ENCODE measurements at regions of chr13 and their contacts with region 1.

Region 1: GRCh38 chr13:67134417-67135129 is 95.6 kb downstream of the PCDH9 start:
- DNase-seq: no peak
- ATAC-seq: peak in 1 of 2 donors; percentile 47

Region 2: GRCh38 chr13:67069117-67069767 is 65.3 kb before region 1 on chr13:
- intact Hi-C with region 1: no loop called
- DNase-seq: no peak
- ATAC-seq: no peak

Region 3: GRCh38 chr13:67090856-67091255 is 43.7 kb before region 1 on chr13:
- intact Hi-C with region 1: loop called in 1 of 2 experiments (anchors 5 kb)
- DNase-seq: no peak
- ATAC-seq: no peak

Region 4: GRCh38 chr13:67229481-67230403 is 95.2 kb after region 1 on chr13 and contains the start of gene PCDH9:
- intact Hi-C with region 1: loop called in 1 of 2 experiments (anchors 5 kb)
- DNase-seq: no peak
- ATAC-seq: peak; percentile 0 to 3
- total RNA-seq, gene PCDH9: 17.9 to 19.0 TPM

Region 5: GRCh38 chr13:67598822-67599221 is 464.2 kb after region 1 on chr13:
- intact Hi-C with region 1: no loop called
- DNase-seq: no peak
- ATAC-seq: no peak

Region 6: DNA sequence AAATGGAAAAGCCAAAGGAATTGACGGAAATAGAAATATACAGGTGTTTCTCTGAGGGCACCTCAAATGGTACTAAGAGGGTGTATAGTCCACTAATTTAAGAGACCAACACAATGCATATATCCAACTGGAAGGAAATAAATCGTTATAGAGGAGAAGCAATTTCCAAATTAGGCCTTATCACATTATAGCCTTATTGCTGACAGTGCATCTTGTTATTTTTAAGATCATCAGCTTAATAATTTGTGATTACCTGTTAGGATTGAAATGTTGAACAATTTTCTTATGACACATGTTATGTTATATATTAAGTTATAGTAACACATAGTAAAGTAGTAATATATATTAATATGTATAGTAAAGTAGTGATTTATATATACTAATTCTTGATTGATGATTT is 1011.3 kb after region 1 on chr13:
- intact Hi-C with region 1: no loop called
- DNase-seq: no peak
- ATAC-seq: no peak

Measured in left cardiac atrium (tissue), 4 donors.